Left ventricle myocardium inferior (tissue), 1 donor: ENCODE measurements at regions of chr15 and their contacts with region 1.

Region 1: DNA sequence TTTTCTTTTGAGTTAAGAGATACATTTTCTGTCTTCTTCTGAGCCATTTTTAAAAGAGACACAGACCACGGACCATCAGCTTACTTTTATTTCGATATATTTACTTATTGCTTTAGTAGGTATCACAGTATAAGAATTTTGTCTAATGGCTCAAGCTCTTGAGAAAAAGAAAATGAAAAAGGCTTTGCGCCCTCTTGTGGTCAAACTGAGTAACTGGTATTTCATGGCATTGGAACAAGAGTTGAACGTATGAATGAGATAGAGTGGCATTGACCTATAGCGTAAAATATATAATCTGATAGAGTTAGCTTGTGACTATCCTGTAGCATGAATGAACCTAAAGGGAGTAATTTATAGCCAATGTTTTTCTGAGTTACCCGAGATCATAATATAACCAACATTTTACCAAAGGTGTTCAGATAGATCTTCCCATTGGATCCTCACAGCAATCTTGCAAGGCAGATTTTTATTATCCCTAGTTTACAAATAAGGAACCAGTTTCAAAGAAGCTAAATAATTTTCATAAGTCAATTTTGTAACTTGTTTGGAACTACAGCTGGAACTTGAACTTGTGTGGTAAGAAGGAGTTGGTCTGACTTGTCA is 154.6 kb downstream of the POLR2M start:
- DNase-seq: no peak
- H3K4me3 ChIP-seq: no peak overlapping the region
- H3K27ac ChIP-seq: no peak overlapping the region
- H3K4me1 ChIP-seq: peaks cover 5% of the 10 kb centered on the region
- H3K27me3 ChIP-seq: no peaks in the 10 kb centered on the region
- CTCF ChIP-seq: peak; percentile 85

Region 2: DNA sequence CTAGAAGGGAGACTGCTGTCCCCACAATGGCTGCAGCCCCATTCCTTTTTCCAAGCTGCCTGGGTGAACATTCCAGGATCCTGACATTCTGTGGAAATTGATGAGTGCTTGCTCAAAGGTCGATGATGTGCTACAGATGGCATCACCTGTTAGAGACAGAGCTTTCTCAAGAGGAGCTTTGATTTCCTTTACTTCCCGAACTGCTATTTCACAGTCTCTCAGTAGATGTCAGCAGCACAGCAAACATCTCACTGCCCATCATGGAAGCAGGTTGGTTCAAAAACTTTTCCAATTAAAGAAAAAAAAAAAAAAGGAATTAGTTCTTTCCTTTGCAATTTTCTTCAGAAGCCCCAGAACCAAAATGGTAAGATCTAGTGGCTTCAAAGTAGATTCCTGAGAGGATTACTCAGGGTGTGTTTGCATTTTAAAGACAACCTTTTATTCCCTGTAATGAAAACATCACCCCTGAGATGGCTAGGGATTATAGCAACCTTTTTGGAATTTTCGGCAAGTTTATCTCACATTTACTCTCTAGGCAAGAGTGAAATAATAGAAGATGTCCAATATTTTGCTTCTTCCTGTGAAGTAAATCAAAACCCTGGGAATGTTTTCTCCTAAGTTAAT is 109.8 kb before region 1 on chr15:
- intact Hi-C with region 1: loop called (anchors 5 kb)
- DNase-seq: no peak
- H3K4me3 ChIP-seq: no peak overlapping the region
- H3K27ac ChIP-seq: no peak overlapping the region
- H3K4me1 ChIP-seq: peaks cover 9% of the 10 kb centered on the region
- H3K27me3 ChIP-seq: no peaks in the 10 kb centered on the region
- CTCF ChIP-seq: peak; percentile 68